GM10248 (cell line): ENCODE measurements at regions of chr15 and their contacts with region 1.

Region 1: GRCh38 chr15:74768771-74769342 is 13.0 kb upstream of the CSK start:
- DNase-seq: peak; percentile 78
- CTCF ChIP-seq: peak; percentile 74

Region 2: GRCh38 chr15:74382004-74382816 is 386.6 kb before region 1 on chr15:
- CTCF ChIA-PET with region 1: interaction called, 17 read pairs
- POLR2A ChIA-PET with region 1: no interaction called
- DNase-seq: peak; percentile 78
- CTCF ChIP-seq: peak; percentile 94

Region 3: DNA sequence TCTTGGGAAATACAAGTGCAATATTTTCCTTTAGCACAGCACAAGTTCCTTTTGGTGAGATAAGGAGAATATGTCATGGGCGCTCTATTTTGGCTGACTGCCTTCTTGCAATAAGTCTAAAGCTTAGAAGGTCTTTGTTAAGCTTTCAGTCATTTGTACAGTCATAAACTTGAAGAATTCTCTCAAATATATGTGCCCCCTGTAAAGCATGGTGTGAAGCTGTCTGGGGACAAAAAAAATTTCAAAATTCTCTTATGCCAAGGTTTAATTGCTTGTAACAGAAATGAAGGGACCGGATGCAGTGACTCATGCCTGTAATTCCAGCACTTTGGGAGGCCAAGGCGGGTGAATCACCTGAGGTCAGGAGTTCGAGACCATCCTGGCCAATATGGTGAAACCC is 249.5 kb before region 1 on chr15:
- CTCF ChIA-PET with region 1: no interaction called
- POLR2A ChIA-PET with region 1: no interaction called
- DNase-seq: no peak
- CTCF ChIP-seq: no peak

Region 4: DNA sequence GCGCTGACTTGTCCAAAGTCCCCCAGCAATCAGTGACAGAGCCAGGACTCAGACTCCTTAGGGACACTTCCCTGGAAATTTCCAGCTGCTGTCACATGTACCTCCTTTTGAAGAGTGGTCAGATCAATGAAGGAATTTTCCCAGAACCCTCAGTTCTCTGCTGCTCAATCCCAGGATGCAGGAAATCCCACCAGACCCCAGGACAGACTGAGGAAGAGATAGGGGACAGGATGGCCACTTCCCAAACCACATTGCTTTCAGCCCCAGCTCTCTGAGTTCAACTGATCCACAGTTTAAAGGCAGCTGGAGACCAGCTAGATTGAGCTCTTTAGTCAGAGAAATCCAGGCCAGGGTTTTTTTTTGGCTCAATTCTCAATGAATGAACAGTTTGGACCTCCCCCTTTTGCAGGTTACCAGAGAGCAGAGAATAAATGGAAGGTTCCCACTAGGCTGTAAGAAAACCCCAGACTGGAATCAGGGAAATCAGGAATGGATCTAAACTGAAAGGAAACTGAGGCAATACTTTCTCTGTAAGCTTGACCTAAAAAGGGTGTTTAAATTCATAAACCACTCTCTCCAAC is 45.0 kb before region 1 on chr15:
- CTCF ChIA-PET with region 1: interaction called, 12 read pairs
- POLR2A ChIA-PET with region 1: no interaction called
- DNase-seq: peak; percentile 60
- CTCF ChIP-seq: no peak

Region 5: GRCh38 chr15:74821091-74821789 is 52.4 kb after region 1 on chr15:
- CTCF ChIA-PET with region 1: interaction called, 17 read pairs
- POLR2A ChIA-PET with region 1: no interaction called
- DNase-seq: peak; percentile 63
- CTCF ChIP-seq: no peak

Region 6: DNA sequence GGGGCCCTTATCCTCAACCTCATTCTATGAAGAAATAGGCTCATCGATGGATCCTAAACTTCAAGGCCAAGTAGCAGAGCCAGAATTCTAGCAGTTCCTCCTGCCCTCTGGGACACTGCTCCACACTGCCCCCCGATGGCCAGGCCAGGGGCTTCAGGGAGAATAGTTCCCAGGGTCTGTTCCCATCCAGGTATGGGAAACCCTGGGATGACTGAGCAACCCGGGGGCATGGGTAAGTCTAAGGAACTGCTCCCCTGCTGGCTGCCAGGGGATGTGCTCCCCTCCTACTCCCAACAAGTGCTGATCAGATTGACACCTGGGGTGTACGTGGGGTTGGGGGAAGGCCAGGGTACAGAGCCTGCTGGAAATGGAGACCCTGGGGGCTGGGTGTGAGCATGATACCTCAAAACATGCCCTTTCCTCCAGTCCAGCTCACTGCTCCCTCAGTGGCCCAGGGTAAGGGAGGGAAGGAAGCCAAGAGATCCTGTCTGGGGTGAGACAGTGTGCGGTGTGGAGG is 66.5 kb after region 1 on chr15:
- CTCF ChIA-PET with region 1: interaction called, 21 read pairs
- POLR2A ChIA-PET with region 1: no interaction called
- DNase-seq: peak; percentile 76
- CTCF ChIP-seq: peak; percentile 76

Region 7: GRCh38 chr15:74906446-74907162 is 137.7 kb after region 1 on chr15 and contains the start of gene FAM219B:
- CTCF ChIA-PET with region 1: interaction called, 47 read pairs
- POLR2A ChIA-PET with region 1: no interaction called
- DNase-seq: peak; percentile 97
- CTCF ChIP-seq: no peak

Region 8: DNA sequence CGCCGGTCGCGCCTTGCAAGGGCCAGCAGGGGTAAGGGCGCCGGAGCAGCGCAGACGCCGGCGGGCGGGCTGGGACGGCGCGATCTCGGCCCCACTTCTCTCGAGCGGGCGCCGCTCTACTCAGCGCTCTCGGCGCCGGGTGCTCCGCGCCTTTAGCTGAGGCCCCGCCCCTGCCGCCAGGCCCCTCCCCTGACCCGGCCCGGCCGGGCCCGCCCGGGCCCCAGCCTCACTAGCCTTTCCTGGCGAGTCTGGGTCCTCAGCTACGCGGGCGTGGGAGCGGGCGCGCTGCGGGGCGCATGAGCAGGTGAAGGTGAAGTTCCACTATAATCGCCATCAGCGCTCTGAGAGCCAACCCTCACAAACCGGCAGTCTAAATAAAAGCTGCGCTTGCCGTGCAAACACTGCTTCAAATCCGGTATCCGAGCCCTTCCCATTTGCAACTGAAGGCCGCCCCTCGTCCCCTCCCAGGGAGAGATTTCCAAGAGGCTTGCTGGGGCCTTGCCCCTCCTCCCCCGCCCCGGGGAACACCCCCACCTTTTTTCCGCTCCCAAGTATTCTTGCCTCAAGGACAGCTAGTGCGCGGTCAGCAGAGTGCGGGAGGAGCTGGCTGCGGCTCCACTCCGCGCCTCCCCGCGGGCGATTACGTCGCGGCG is 187.9 kb after region 1 on chr15 and contains the start of gene RPP25:
- CTCF ChIA-PET with region 1: interaction called, 200 read pairs
- POLR2A ChIA-PET with region 1: no interaction called
- DNase-seq: peak; percentile 88
- CTCF ChIP-seq: no peak